Activated CD4-positive, alpha-beta memory T cell treated with anti-CD3 and anti-CD28 coated beads, Interleukin-2, amount 10 ng/mL, durations not matched to agents 7 days and 5 days (primary cell): ENCODE measurements at regions of chr9 and their contacts with region 1.

Region 1: DNA sequence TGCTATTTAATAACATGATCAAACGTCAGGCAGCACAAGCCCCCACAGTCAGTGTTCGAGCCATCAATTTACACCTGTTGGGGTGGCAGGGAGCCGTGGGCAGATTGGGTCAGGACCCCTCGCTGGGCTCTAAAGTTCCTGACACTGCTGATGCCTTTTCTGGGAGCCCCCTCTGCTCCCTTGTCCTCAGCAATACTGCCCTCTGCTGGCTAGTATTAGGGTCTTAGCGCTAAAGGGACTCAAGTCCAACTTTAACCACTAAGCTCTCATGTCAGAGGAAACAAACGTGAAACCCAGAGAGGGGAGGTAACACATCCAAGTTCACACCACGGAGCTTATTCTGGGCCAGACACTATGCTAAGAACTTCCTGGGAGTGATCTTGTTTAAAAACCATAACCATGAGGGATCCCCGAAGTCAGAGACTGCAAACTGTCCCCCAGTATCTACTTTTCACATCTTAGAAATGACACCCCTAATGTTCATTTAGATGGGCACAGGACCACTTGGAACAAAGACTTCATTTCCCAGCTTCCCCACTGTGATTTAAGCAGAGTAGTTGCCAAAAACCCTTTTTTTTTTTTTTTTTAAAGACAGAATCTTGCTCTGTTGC is 20.4 kb downstream of the ANKS6 start:
- DNase-seq: peak; percentile 41
- H3K4me3 Mint-ChIP-seq: no peak overlapping the region
- H3K27ac Mint-ChIP-seq: no peak overlapping the region
- H3K4me1 Mint-ChIP-seq: no peaks in the 10 kb centered on the region
- H3K27me3 Mint-ChIP-seq: no peaks in the 10 kb centered on the region

Region 2: DNA sequence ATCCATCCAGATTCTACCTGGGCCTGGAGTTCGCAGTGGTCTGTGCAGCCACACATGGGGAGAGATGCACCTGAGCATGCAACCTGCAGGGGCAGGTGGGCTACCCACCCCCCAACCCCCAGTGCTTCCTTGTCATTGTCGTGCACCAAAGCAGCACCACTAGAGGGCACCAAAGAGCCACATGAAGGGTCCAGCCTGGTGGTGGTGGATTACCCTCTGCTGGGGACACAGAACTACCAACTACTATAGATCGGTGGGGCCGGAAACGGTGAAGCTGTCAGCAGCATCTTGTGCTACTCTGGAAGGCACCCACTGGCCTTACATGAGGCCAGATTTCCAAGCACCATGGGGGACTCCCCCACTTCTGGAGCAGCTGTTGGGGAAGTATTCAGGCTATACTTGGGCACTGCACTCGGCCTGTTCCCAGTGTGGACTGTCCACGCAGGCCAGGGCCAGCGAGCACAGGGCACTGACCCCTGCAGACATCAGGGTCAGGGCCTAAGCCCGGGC is 460.3 kb before region 1 on chr9:
- CTCF ChIA-PET with region 1: interaction called, 32 read pairs
- POLR2A ChIA-PET with region 1: no interaction called
- DNase-seq: peak; percentile 80
- H3K4me3 Mint-ChIP-seq: no peak overlapping the region
- H3K27ac Mint-ChIP-seq: no peak overlapping the region
- H3K4me1 Mint-ChIP-seq: no peaks in the 10 kb centered on the region
- H3K27me3 Mint-ChIP-seq: peaks cover 4% of the 10 kb centered on the region

Region 3: GRCh38 chr9:98536542-98537173 is 239.3 kb before region 1 on chr9:
- CTCF ChIA-PET with region 1: interaction called, 29 read pairs
- POLR2A ChIA-PET with region 1: no interaction called
- DNase-seq: peak; percentile 48
- H3K4me3 Mint-ChIP-seq: no peak overlapping the region
- H3K27ac Mint-ChIP-seq: no peak overlapping the region
- H3K4me1 Mint-ChIP-seq: no peaks in the 10 kb centered on the region
- H3K27me3 Mint-ChIP-seq: peaks cover 13% of the 10 kb centered on the region

Region 4: GRCh38 chr9:98642661-98643312 is 133.1 kb before region 1 on chr9:
- CTCF ChIA-PET with region 1: no interaction called
- POLR2A ChIA-PET with region 1: no interaction called
- DNase-seq: no peak
- H3K4me3 Mint-ChIP-seq: no peak overlapping the region
- H3K27ac Mint-ChIP-seq: no peak overlapping the region
- H3K4me1 Mint-ChIP-seq: no peaks in the 10 kb centered on the region
- H3K27me3 Mint-ChIP-seq: peaks cover 18% of the 10 kb centered on the region